Cardiac septum (tissue), 1 donor: ENCODE measurements at regions of chr19 and their contacts with region 1.

Region 1: GRCh38 chr19:17303167-17303939 is at the start of gene ABHD8:
- DNase-seq: peak; percentile 99
- total RNA-seq, gene ABHD8: 8.6 TPM

Region 2: GRCh38 chr19:17336872-17337722 is 33.7 kb after region 1 on chr19 and contains the start of gene GTPBP3:
- intact Hi-C with region 1: loop called (anchors 5 kb)
- DNase-seq: peak; percentile 97
- total RNA-seq, gene GTPBP3: 9.8 TPM